H1 (cell line): ENCODE measurements at regions of chr11 and their contacts with region 1.

Region 1: DNA sequence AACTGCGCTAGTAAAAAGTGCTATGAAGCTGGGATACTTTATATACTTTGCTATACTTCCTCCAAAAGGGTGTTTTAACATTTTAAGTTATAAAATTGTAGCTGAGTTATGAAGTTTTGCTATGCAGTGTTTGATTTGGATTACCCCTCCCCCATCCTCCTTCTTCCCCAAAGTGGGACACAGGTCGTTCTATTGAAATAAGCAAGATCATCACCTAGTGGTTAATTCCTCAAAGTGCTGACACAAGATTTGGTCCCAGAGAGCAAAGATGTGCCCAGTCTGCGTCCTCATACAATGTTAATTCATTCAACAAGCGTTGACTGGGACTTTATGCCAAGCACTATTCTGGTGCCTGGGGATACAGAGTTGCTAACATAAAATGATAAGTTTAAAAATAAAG is 78.5 kb downstream of the SPON1 start:
- DNase-seq: no peak
- H3K4me3 ChIP-seq: no peak overlapping the region
- H3K27ac ChIP-seq: no peak overlapping the region
- H3K4me1 ChIP-seq: no peaks in the 10 kb centered on the region; a peak in 1 of 7 replicates
- H3K27me3 ChIP-seq: no peaks in the 10 kb centered on the region
- CTCF ChIP-seq: peak in 2 of 3 experiments; percentile 55 to 71; a peak in 3 of 4 replicates
- EP300 ChIP-seq: no peak
- POLR2A ChIP-seq: no peak
- RAD21 ChIP-seq: peak; percentile 78 to 80

Region 2: DNA sequence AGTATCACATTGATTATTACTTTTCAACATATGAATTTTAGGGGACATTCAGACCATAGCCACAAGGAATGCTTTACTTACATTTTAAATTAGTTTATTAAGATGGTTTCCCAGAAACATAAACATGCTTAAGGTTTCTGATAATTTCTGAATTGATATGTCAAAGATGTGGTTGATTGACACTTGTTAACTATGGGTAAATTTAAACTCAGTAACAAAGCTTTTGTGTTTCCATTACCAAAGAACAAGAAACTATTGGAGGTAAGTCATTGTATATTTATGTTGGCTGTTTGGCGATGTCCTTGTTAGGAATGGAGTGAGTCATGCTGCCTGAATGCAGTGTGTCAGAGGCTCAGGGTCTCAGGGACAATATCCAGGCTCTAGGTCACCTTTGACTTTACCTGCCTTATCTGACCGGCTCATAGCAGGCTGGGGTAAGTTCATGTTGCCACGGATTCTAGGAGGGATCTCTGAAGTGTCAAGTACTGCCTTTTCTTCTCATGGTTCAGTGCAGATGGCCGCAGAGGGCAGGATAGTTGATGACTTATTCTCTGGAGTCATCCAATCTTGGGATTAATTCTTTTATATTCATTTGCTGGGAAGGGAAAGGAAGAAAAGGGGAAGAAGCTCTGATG is 25.4 kb before region 1 on chr11:
- CTCF ChIA-PET with region 1: no interaction called
- POLR2A ChIA-PET with region 1: no interaction called
- DNase-seq: no peak
- H3K4me3 ChIP-seq: no peak overlapping the region
- H3K27ac ChIP-seq: no peak overlapping the region
- H3K4me1 ChIP-seq: no peaks in the 10 kb centered on the region
- H3K27me3 ChIP-seq: no peaks in the 10 kb centered on the region
- CTCF ChIP-seq: no peak
- EP300 ChIP-seq: no peak
- POLR2A ChIP-seq: no peak
- RAD21 ChIP-seq: no peak

Region 3: GRCh38 chr11:14052198-14052597 is 11.2 kb after region 1 on chr11:
- CTCF ChIA-PET with region 1: interaction called, 14 read pairs
- POLR2A ChIA-PET with region 1: interaction called, 3 read pairs
- DNase-seq: no peak
- H3K4me3 ChIP-seq: no peak overlapping the region
- H3K27ac ChIP-seq: no peak overlapping the region
- H3K4me1 ChIP-seq: no peaks in the 10 kb centered on the region
- H3K27me3 ChIP-seq: peaks cover 0 to 3% (median 0%) of the 10 kb centered on the region in 4 experiments; a peak in 1 of 7 replicates
- CTCF ChIP-seq: no peak
- EP300 ChIP-seq: no peak
- POLR2A ChIP-seq: no peak
- RAD21 ChIP-seq: no peak

Region 4: DNA sequence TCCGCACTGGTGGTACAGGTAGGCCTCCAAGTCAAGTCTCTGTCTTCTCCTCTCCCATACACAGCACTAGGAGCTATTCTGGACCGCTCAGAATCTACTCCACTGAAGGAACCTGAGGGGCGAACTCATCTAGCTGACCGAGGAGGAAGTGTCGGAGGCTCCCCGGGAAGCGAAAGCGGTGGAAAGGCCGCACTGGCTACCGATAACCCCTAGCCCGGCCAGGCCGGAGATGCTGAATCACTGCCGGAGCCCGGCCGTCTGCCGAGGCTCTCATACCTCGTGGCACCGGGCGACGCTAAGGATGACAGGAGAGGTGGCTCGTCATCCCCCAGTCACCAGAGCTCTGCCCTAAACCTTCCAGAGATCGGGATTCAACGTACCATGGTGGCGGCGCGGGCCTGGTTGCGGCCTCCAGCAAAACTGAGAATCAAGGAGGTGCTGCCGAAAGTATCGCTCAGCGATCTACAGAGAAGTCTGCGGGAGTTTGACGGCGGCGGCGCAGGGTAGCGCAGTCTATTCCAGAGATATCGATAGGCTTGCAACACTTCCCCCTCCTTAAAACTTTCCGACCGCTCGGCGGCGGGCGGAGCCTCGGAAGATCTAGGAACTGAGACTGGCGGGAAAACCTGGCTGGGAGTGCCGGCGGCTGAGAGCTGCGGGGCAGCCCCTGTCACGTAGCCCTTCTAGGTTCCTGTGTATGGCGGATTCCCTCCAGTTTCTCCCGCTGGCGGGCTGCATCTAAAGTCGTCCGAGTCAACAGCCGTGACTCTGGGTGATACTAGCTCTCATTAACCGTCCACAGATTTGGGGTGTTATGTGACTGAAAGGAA is 479.1 kb after region 1 on chr11 and contains the start of gene PSMA1:
- CTCF ChIA-PET with region 1: no interaction called
- POLR2A ChIA-PET with region 1: no interaction called
- DNase-seq: peak; percentile 91
- H3K4me3 ChIP-seq: peak within 1 kb of the TSS; percentile 90 to 100 (median 100)
- H3K27ac ChIP-seq: peak within 1 kb of the TSS; percentile 74
- H3K4me1 ChIP-seq: peaks cover 0 to 2% (median 0%) of the 10 kb centered on the region in 4 experiments; a peak in 2 of 7 replicates
- H3K27me3 ChIP-seq: no peaks in the 10 kb centered on the region
- CTCF ChIP-seq: no peak
- EP300 ChIP-seq: peak in 1 of 2 experiments; percentile 96; a peak in 2 of 3 replicates
- POLR2A ChIP-seq: peak; percentile 46 to 88
- RAD21 ChIP-seq: peak; percentile 18 to 23; a peak in 3 of 4 replicates
- total RNA-seq, gene PSMA1: 148 and 150 TPM in 2 replicates